PC-9 (cell line): ENCODE measurements at regions of chr17 and their contacts with region 1.

Region 1: DNA sequence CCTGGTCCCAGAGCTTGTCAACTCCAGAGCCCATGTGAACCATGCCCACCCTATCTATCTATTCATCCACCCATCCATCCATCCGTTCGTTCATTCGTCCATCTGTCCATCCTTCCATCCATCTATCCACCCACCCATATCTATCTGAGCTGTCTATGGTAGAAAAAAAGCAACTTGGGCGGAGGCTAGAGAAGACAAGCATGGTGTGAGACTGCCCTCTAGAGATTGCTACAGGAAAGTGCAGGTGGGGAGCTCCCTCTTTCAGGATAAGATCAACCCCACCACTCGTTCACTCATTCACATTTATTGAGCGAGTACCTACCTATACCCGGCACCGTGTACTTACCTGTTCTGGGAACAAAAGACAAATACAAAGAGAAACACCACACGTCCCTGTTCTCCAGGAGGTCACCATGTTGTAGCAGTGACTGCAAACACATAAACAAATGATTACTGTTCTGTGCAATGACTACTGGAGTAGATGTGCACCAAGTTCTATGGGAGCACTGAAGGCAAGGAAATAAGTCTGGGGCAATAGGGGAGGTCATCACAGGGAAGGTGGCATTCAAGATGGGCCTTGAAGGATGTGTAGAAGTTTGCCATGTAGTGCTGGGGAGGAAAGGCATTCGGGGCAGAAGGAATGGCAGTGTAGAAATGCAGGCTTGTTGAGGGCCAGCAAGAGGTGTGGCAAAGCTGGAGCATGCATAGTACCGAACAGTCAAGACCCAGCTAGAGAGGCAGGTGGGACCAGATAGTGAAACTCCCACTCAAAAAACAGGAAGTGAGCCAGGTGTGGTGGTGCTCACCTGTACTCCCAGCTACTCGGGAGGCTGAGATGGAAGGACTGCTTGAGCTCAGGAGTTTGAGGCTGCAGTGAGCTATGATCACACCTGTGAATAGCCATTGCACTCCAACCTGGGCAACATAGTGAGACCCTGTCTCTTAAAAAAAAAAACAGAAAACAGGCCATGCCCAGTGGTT is 13.4 kb upstream of the ATP5MC1 start:
- DNase-seq: peak; percentile 49 to 52
- H3K4me3 ChIP-seq: no peak overlapping the region
- H3K27ac ChIP-seq: no peak overlapping the region
- H3K4me1 ChIP-seq: no peaks in the 10 kb centered on the region
- H3K27me3 ChIP-seq: 0 out of 2 replicates have a peak, but pooled peaks cover 4% of the 10 kb centered on the region
- CTCF ChIP-seq: peak; percentile 99

Region 2: DNA sequence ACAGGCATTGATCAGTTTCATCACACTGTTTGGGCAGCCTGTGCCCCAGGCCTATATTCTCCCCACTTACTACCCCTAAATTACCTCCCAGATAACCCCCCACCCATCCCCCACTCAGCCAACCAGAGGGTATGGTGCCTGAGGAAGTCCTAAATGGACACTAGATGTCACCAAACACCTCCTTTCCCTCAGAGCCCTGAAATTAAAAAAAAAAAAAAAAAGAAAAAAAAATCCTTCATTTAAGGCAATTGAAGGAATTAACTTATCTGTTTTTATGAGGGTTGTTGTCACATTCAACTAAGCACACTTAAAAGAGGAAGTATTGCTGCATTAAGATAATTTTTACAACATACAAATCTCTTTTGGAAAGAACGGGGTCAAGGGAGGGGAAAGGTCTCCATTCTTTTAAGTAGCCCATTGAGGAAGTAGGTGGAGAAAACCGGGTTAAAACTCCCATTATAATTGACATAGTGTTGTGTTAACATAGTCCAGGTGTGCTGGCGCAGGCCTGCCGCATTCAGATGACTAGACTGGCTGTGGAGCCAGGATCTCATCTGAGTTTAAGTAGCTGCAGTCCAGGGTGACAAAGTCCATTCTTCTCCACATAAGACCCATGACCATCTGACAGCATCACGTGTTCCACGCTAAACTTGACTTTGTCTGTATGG is 725.4 kb before region 1 on chr17:
- CTCF ChIA-PET with region 1: no interaction called
- POLR2A ChIA-PET with region 1: no interaction called
- intact Hi-C with region 1: loop called (anchors 10 kb)
- DNase-seq: peak; percentile 27 to 64
- H3K4me3 ChIP-seq: no peak overlapping the region
- H3K27ac ChIP-seq: no peak overlapping the region
- H3K4me1 ChIP-seq: no peaks in the 10 kb centered on the region; the same call in 1 of the 2 replicates
- H3K27me3 ChIP-seq: peaks cover 33% of the 10 kb centered on the region; the same call in 1 of the 2 replicates
- CTCF ChIP-seq: peak; percentile 80

Region 3: DNA sequence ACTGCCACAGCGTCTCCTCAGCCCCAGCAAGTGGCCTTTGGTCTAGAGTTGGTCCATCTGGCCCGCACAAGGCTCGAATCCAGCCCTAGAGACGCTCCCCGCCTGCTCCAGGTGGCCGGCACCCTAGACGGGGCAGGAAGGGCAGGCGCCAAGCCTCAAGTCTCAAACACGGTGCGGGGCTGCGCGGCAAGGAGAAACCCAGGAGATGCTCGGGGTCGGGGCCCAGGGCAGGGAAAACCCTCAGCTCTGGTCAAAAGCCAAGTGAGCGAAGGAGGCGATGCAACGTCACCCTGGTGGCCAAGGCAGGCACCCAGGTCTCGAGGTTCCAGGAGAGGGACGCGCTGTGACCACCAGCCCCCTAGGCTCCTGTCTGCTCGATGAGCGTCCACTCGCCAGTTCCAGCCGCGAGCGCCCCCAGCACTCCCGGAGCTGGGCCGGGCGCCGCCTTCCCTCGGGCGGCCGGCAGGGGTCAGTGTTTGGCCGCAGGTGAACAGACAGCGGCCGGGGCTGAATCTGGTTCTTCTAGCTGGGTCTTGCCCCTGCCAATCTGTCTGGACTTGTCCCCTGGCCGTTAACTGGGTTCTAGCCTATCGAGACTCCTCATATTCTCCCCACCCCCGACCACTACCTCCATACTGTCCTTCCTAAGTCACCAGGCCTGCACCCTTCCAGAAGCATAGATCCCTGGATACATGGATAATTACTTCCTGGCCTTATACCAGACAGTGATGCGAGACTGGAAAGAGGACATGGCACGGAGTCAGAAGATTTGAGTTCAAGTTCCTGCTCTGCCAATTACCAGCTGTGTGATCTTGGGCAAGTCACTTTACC is 200.9 kb before region 1 on chr17:
- CTCF ChIA-PET with region 1: interaction called, 20 read pairs
- POLR2A ChIA-PET with region 1: interaction called, 3 read pairs
- intact Hi-C with region 1: loop called (anchors 2 kb)
- DNase-seq: peak; percentile 41 to 64
- H3K4me3 ChIP-seq: no peak overlapping the region; the same call in 1 of the 2 replicates
- H3K27ac ChIP-seq: no peak overlapping the region
- H3K4me1 ChIP-seq: 0 out of 2 replicates have a peak, but pooled peaks cover 4% of the 10 kb centered on the region
- H3K27me3 ChIP-seq: peaks cover 36% of the 10 kb centered on the region
- CTCF ChIP-seq: peak; percentile 97

Region 4: GRCh38 chr17:48724251-48725003 is 154.8 kb before region 1 on chr17:
- CTCF ChIA-PET with region 1: interaction called, 11 read pairs
- POLR2A ChIA-PET with region 1: no interaction called
- intact Hi-C with region 1: loop called (anchors 1 kb)
- DNase-seq: peak; percentile 50 to 63
- H3K4me3 ChIP-seq: no peak overlapping the region
- H3K27ac ChIP-seq: no peak overlapping the region
- H3K4me1 ChIP-seq: no peaks in the 10 kb centered on the region
- H3K27me3 ChIP-seq: peaks cover 72% of the 10 kb centered on the region
- CTCF ChIP-seq: peak; percentile 89

Region 5: GRCh38 chr17:48814504-48814903 is 64.7 kb before region 1 on chr17:
- CTCF ChIA-PET with region 1: interaction called, 6 read pairs
- POLR2A ChIA-PET with region 1: no interaction called
- intact Hi-C with region 1: loop called (anchors 2 kb)
- DNase-seq: peak in 1 of 2 experiments; percentile 23
- H3K4me3 ChIP-seq: no peak overlapping the region
- H3K27ac ChIP-seq: no peak overlapping the region
- H3K4me1 ChIP-seq: 0 out of 2 replicates have a peak, but pooled peaks cover 3% of the 10 kb centered on the region
- H3K27me3 ChIP-seq: peaks cover 14% of the 10 kb centered on the region; the same call in 1 of the 2 replicates
- CTCF ChIP-seq: peak; percentile 75